Gastrocnemius medialis (tissue), 4 donors: ENCODE measurements at regions of chr12 and their contacts with region 1.

Region 1: GRCh38 chr12:132783917-132784531 is 22.4 kb upstream of the ANKLE2 start:
- DNase-seq: peak; percentile 24 to 39
- ATAC-seq: no peak
- H3K4me3 ChIP-seq: no peak overlapping the region
- H3K27ac ChIP-seq: no peak overlapping the region
- H3K4me1 ChIP-seq: no peaks in the 10 kb centered on the region
- H3K27me3 ChIP-seq: no peaks in the 10 kb centered on the region
- CTCF ChIP-seq: no peak
- POLR2A ChIP-seq: no peak

Region 2: DNA sequence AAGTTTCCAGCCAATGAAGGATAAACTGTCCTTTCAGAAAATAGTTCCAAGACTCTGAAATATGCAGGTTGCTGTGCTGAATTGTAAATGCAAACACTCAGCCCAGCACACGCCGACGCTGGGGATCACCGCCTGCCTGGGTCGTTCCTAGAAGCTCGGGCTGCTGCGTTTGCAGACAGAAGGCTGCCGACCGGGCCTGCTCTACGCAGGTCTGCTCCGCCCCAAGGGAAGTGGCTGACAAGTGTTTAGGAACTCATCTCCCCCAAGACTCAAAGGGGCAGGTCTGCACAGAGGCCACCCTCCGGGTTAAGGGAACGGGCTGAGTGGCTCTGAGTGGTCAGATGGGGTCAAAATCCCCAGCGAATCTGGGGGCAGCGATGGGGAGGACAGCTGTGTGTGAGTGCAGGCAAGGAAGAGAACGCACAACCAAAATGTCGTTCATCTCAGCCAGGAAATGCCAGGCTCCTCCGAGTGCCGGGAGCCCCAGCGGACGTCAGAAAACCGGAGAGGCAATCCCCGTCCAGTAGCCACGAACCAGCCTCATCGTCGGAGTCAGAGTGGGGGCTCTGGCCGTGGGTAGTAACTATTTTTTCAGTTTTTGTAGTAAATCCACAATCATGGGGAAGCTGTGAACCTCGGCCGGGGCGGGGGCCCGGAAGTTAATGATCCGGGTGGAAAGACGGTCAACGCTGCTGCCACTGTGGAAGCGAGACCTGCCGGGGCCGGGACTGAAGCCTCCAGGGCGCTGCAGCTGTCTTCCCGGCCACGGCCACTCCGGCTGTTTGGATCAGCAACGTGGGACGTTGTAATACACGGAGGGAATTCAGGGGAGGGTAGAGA is 460.6 kb before region 1 on chr12:
- in situ Hi-C with region 1: no loop called
- intact Hi-C with region 1: no loop called
- DNase-seq: no peak
- ATAC-seq: no peak
- H3K4me3 ChIP-seq: no peak overlapping the region
- H3K27ac ChIP-seq: no peak overlapping the region
- H3K4me1 ChIP-seq: no peaks in the 10 kb centered on the region
- H3K27me3 ChIP-seq: peaks cover 30 to 44% (median 37%) of the 10 kb centered on the region in 3 donors
- CTCF ChIP-seq: no peak
- POLR2A ChIP-seq: no peak

Region 3: DNA sequence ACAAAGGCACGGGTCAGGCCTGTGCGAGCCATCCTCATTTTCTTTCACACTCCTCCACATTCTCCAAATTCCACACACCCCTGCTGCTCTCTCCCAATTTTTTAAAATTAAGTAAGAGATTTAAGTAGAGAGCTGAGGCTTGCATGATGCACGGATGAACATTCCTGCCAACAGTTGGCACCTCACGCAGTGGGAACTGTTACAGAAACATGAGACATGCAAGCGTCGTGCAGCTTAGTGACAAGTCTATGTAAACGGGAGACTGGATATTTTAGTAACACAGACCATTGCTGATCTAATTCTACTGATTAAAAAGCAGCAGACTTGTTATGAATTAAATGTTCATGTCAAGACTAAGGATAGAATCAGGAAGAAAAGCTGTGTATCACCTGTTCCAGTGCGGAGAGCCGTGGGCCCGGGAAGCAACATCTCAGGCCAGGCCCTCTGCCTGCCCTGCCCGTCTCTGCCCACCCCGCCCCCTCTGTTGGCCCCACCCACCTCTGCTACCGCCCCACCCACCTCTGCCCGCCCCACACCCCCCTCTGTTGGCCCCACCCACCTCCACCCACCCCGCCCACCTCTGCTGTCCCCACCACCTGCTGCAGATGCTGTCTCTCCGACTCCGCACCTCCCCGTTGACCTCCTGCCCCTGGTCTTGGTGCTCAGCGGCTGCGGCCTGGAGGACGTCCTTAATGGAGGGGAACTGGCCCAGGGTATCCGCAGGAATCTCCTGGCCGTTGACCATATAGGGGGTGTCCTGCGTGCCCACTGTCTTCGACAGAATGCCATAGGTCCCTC is 23.5 kb after region 1 on chr12:
- in situ Hi-C with region 1: no loop called
- intact Hi-C with region 1: loop called (anchors 1 kb)
- DNase-seq: peak in 1 of 2 donors; percentile 24
- ATAC-seq: peak in 1 of 2 donors; percentile 64
- H3K4me3 ChIP-seq: no peak overlapping the region
- H3K27ac ChIP-seq: no peak overlapping the region
- H3K4me1 ChIP-seq: peaks cover 0 to 4% of the 10 kb centered on the region in 2 donors
- H3K27me3 ChIP-seq: no peaks in the 10 kb centered on the region
- CTCF ChIP-seq: no peak
- POLR2A ChIP-seq: no peak